K562 (cell line): ENCODE measurements at regions of chr6 and their contacts with region 1.

Region 1: GRCh38 chr6:135438907-135439535 is 58.5 kb downstream of the AHI1 start:
- DNase-seq: peak; percentile 33 to 66 (median 40)
- ATAC-seq: peak; percentile 85
- H3K4me3 ChIP-seq: no peak overlapping the region
- H3K27ac ChIP-seq: no peak overlapping the region
- H3K4me1 ChIP-seq: peaks cover 0 to 8% of the 10 kb centered on the region in 2 experiments; a peak in 3 of 5 replicates
- H3K27me3 ChIP-seq: no peaks in the 10 kb centered on the region
- CTCF ChIP-seq: peak; percentile 39 to 88 (median 63); a peak in 5 of 6 replicates
- EP300 ChIP-seq: no peak
- POLR2A ChIP-seq: no peak
- RAD21 ChIP-seq: peak; percentile 85 to 91

Region 2: DNA sequence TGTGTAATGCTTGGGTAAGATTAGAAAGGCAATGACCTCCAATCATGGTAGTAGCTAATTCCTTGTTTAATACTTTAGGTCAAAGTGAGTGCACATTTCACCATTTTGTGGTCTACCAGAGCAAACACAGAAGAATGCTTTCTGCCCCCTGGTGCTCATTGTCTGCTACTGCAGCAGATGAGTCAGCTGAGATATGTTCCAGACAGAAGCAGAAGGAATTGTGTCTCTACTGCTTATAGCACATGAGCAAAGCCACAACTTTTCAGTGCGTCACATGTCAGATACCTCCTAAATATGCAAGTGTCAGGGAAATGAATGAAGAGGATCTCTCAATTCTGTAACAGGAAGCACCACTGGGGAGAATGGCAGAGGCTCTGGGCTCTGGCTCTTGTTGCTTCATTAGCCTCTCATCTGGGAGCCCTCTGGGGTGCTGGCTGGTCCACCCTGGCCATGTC is 798.0 kb before region 1 on chr6:
- CTCF ChIA-PET with region 1: no interaction called
- POLR2A ChIA-PET with region 1: no interaction called
- in situ Hi-C with region 1: no loop called
- intact Hi-C with region 1: loop called (anchors 10 kb)
- DNase-seq: peak; percentile 59 to 84 (median 64)
- ATAC-seq: peak; percentile 95
- H3K4me3 ChIP-seq: no peak overlapping the region
- H3K27ac ChIP-seq: no peak overlapping the region
- H3K4me1 ChIP-seq: 0 out of 5 replicates have a peak, but pooled peaks cover 0 to 2% of the 10 kb centered on the region in 2 experiments
- H3K27me3 ChIP-seq: no peaks in the 10 kb centered on the region
- CTCF ChIP-seq: peak; percentile 76 to 89 (median 88)
- EP300 ChIP-seq: no peak
- POLR2A ChIP-seq: no peak
- RAD21 ChIP-seq: peak; percentile 97 to 98

Region 3: DNA sequence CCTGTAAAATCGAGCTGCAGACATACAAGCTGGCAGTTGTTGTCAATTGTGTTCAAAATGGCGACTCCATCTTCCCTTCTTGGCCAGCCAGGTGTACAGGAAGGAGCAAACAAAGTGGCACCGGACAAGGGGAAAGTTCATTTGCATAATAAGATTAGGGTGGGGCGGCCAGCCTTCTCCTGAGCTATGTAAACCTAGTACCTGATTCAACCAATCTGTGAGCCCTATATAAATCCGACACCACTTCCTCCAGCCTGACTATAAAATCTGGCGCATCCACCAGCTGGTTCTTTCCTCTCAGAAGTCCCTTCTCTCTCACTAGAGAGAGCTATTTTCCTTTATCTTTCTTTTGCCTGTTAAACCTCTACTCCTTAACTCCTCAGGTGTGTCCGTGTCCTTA is 376.3 kb before region 1 on chr6:
- CTCF ChIA-PET with region 1: no interaction called
- POLR2A ChIA-PET with region 1: no interaction called
- in situ Hi-C with region 1: no loop called
- intact Hi-C with region 1: loop called (anchors 5 kb)
- DNase-seq: peak in 2 of 4 experiments; percentile 30 to 55
- ATAC-seq: peak; percentile 87
- H3K4me3 ChIP-seq: no peak overlapping the region
- H3K27ac ChIP-seq: no peak overlapping the region
- H3K4me1 ChIP-seq: peaks cover 0 to 3% of the 10 kb centered on the region in 2 experiments; a peak in 1 of 5 replicates
- H3K27me3 ChIP-seq: no peaks in the 10 kb centered on the region
- CTCF ChIP-seq: peak; percentile 33 to 58 (median 36); a peak in 3 of 6 replicates
- EP300 ChIP-seq: no peak
- POLR2A ChIP-seq: no peak
- RAD21 ChIP-seq: peak; percentile 67 to 77

Region 4: DNA sequence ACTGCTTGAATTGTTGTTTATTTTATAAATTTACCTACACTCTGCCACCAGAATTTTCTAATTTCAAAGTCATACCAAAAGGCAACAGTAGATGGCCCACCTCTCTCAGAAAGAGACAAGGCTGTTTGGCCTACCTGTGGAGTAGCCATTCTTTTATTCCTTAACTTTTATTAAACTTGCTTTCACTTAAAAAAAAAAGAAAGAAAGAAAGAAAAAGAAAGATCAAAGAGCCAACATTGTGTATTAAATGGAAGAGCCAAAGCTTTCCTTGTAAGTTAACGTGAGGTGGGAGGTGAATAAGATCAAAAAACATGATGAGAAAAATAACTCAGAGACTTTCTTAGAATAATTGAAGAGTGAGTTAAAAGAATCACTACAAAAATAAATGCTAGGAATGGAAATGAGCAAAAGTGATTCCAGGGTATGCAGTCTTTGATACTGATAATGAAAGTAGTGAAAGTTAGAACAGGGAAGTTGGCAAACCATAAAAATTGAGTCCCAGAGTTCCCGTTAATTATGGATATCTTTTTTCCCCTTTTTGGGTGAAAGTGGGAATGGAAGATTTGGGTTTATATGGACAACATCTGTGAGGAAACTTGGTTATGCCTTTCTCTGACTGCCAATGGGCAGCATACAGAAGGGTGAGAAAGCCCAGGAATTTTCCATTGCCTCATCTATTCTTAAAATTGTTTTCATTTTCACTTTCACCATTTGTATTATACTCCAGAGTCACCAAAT is 293.8 kb before region 1 on chr6:
- CTCF ChIA-PET with region 1: interaction called, 18 read pairs
- POLR2A ChIA-PET with region 1: no interaction called
- in situ Hi-C with region 1: no loop called
- intact Hi-C with region 1: loop called (anchors 1 kb)
- DNase-seq: peak; percentile 44 to 76 (median 50)
- ATAC-seq: peak; percentile 60
- H3K4me3 ChIP-seq: no peak overlapping the region
- H3K27ac ChIP-seq: peak overlapping the region; percentile 77
- H3K4me1 ChIP-seq: peaks cover 6 to 55% of the 10 kb centered on the region in 2 experiments
- H3K27me3 ChIP-seq: no peaks in the 10 kb centered on the region
- CTCF ChIP-seq: peak; percentile 61 to 85 (median 71); a peak in 5 of 6 replicates
- EP300 ChIP-seq: no peak
- POLR2A ChIP-seq: no peak
- RAD21 ChIP-seq: peak; percentile 86 to 91

Region 5: DNA sequence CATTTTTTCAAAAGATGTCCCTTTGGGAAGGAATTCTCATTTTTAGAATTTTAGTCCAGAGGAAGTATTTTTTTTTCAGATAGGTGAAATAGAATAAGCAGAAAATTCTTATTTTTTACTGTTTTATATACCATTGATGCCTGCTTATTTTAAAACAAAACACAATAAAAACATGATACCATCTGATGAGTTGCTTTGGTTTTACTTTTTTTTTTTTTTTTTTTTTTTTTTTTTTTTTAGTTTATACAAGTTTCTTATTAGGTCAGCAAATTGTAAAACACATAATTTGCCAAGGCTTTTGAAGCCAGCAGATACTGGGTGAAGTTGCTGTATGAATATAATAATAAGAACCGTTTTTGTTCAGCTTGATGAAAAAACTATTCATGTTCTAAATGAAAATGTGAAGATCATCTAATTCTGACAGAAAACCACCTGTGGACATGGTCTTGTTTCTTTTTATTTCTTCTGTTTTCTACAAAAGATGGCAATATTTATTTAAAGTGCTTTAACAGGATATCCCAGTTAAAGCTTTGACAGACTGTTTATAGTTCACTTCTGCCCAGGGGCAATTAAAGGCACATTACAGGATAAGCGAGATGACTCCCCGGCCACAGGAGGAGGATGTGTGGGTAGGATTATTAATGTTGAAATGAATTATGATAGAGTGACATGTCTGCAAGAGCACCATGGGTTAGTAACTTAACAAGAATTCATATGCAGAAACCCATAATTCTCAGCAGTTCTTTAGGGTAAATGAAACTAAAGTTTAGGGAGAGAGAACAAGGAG is 226.8 kb before region 1 on chr6:
- CTCF ChIA-PET with region 1: no interaction called
- POLR2A ChIA-PET with region 1: interaction called, 4 read pairs
- in situ Hi-C with region 1: no loop called
- intact Hi-C with region 1: loop called (anchors 5 kb)
- DNase-seq: no peak
- ATAC-seq: no peak
- H3K4me3 ChIP-seq: no peak overlapping the region
- H3K27ac ChIP-seq: no peak overlapping the region
- H3K4me1 ChIP-seq: no peaks in the 10 kb centered on the region; a peak in 1 of 5 replicates
- H3K27me3 ChIP-seq: no peaks in the 10 kb centered on the region
- CTCF ChIP-seq: no peak
- EP300 ChIP-seq: no peak
- POLR2A ChIP-seq: no peak
- RAD21 ChIP-seq: no peak

Region 6: GRCh38 chr6:135497412-135498269 is 58.6 kb after region 1 on chr6 and contains the start of gene AHI1:
- CTCF ChIA-PET with region 1: no interaction called
- POLR2A ChIA-PET with region 1: no interaction called
- in situ Hi-C with region 1: no loop called
- intact Hi-C with region 1: no loop called
- DNase-seq: peak; percentile 94 to 99 (median 96)
- ATAC-seq: peak; percentile 93
- H3K4me3 ChIP-seq: peak within 1 kb of the TSS; percentile 77
- H3K27ac ChIP-seq: peak within 1 kb of the TSS; percentile 88
- H3K4me1 ChIP-seq: peaks cover 13 to 15% of the 10 kb centered on the region in 2 experiments
- H3K27me3 ChIP-seq: no peaks in the 10 kb centered on the region
- CTCF ChIP-seq: peak in 1 of 3 experiments; percentile 1; a peak in 1 of 6 replicates
- EP300 ChIP-seq: no peak
- POLR2A ChIP-seq: peak; percentile 96
- RAD21 ChIP-seq: 0 out of 4 replicates have a peak, but pooled peaks of 1 of the 2 experiments have one; percentile 2
- polyA plus RNA-seq, gene AHI1: 24.7 to 27.7 TPM